ENCODE measurements at regions of chr2 and their contacts with region 1.

Region 1: DNA sequence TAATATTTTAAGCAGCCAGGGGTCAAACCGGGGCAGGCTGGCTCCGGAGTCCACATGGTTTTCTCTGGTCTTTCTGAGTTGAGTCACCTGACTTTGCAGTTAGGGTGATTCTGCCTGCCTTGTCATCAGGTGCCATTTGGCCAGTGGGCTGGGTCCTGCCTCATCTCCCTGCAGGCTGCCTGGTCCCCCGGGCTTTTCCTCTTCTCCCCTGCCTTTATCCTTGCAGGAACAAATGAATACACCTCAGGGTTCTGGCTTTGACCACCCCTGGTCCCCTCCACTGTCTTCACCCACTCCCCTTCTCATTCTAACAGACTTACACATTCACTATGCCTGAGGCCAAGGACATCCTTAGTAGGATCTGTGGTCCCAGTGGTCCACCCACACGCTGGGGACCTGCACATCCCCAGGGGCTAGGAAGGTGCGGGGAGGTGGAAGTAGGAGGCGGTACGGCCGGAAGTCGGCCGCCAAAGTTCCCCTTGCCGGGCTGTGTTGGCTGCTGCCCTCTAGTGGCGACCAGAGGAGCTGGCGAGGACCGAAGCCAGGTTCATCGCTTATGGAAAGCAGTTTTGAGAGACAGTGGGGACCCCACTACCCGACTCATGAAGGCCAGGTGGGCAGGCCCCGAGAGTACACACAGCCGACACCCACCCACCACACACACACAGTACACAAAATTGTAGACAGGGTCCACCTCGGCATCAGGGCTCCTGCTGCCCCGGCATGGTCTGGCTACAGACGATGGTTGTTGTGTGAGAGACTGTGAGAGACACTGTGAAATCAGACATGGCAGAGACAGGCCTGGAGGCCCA is 6.3 kb upstream of the TEX261 start:
- DNase-seq: no peak
- H3K4me3 ChIP-seq: peak overlapping the region; percentile 17
- H3K27me3 ChIP-seq: peaks cover 4% of the 10 kb centered on the region
- CTCF ChIP-seq: peak; percentile 96

Region 2: DNA sequence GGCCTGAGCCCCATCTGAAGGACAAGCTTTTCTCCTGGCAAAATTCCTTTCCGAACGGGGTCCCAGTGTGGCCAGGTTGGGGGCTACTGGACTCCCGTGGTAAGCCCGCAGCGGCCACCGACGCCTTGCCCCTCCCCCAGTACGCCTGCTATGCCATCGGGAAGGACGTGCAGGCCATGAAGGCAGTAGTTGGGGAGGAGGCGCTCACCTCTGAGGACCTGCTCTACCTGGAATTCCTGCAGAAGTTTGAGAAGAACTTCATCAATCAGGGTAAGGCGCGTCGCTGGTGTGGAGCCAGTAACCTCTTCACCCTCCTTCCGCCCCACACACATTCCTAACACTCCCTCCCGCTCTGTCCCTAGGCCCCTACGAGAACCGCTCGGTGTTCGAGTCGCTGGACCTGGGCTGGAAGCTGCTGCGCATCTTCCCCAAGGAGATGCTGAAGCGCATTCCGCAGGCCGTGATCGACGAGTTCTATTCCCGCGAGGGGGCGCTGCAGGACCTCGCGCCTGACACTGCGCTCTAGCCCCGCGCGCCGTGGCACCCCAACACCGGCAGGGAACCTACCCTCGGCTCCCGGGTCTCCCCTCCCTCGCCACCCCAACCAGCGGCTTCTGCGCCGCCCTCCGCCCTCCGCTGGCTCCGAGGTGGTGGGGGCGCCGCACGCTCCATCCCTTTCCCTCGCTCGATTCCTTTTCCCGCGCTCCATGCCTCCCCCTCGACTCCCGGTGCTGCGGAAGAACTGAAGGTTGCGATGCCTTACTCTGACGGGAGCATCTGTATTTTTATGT is 36.2 kb before region 1 on chr2:
- CTCF ChIA-PET with region 1: interaction called, 15 read pairs
- POLR2A ChIA-PET with region 1: no interaction called
- DNase-seq: no peak
- H3K4me3 ChIP-seq: peak overlapping the region; percentile 37
- H3K27me3 ChIP-seq: peaks cover 1% of the 10 kb centered on the region; the same call in 1 of the 2 replicates
- CTCF ChIP-seq: peak; percentile 83

Region 3: DNA sequence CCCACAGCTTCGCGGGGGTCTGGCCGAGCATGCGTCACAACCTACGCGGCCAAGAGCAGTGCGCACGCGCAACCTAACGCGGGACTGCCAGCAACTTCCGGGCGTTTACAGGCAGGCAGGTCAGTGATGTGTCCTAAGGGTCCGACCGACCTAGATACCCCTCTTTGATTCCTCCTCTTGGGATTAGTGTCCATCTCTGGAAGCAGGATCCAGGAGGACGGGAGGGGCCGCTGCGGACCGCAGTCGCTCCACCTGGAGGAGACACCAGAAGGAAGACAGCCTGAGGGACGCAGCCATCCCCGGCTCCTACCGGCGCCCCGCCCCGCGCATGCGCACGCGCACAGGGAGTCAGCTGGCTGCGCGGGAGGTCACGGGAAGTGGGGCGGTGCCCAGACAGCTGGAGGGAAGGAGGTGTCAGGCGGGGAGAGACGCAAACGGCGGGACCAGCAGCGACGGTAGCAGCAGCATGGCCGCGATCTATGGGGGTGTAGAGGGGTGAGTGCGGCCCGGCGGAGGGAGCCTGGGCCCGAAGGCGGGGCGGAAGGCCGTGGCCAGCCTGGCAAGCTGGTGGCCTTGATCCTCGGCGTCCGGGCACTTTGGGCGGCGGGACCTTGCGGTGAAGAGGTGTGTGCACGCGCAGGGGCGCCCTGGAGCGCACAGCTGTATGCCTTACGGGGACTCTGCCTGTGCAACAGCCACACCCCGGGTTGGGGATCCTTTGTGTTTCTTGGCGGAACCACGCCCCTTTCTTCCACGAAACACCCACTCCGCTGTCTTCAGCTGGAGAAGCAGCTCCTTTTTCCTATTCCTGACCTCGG is 67.4 kb after region 1 on chr2 and contains the start of gene NAGK:
- CTCF ChIA-PET with region 1: interaction called, 13 read pairs
- POLR2A ChIA-PET with region 1: interaction called, 5 read pairs
- DNase-seq: peak; percentile 71
- H3K4me3 ChIP-seq: peak within 1 kb of the TSS; percentile 71
- H3K27me3 ChIP-seq: 0 out of 2 replicates have a peak, but pooled peaks cover 1% of the 10 kb centered on the region
- CTCF ChIP-seq: no peak
- polyA plus RNA-seq, gene NAGK: 99.7 and 118 TPM in 2 replicates

Region 4: GRCh38 chr2:71668326-71669057 is 667.5 kb after region 1 on chr2:
- CTCF ChIA-PET with region 1: no interaction called
- POLR2A ChIA-PET with region 1: no interaction called
- DNase-seq: no peak
- H3K4me3 ChIP-seq: no peak overlapping the region
- H3K27me3 ChIP-seq: peaks cover 8% of the 10 kb centered on the region
- CTCF ChIP-seq: no peak

Measured in BJ (cell line).